HCT116 (cell line): ENCODE measurements at regions of chr9 and their contacts with region 1.

Region 1: GRCh38 chr9:124617471-124618141 is 110.4 kb upstream of the NR5A1 start:
- DNase-seq: peak; percentile 68
- ATAC-seq: peak; percentile 88
- H3K4me3 ChIP-seq: no peak overlapping the region
- H3K27ac ChIP-seq: no peak overlapping the region
- H3K4me1 ChIP-seq: peaks cover 36 to 59% of the 10 kb centered on the region in 2 experiments
- H3K27me3 ChIP-seq: no peaks in the 10 kb centered on the region
- CTCF ChIP-seq: peak; percentile 96
- POLR2A ChIP-seq: no peak
- RAD21 ChIP-seq: peak; percentile 97

Region 2: DNA sequence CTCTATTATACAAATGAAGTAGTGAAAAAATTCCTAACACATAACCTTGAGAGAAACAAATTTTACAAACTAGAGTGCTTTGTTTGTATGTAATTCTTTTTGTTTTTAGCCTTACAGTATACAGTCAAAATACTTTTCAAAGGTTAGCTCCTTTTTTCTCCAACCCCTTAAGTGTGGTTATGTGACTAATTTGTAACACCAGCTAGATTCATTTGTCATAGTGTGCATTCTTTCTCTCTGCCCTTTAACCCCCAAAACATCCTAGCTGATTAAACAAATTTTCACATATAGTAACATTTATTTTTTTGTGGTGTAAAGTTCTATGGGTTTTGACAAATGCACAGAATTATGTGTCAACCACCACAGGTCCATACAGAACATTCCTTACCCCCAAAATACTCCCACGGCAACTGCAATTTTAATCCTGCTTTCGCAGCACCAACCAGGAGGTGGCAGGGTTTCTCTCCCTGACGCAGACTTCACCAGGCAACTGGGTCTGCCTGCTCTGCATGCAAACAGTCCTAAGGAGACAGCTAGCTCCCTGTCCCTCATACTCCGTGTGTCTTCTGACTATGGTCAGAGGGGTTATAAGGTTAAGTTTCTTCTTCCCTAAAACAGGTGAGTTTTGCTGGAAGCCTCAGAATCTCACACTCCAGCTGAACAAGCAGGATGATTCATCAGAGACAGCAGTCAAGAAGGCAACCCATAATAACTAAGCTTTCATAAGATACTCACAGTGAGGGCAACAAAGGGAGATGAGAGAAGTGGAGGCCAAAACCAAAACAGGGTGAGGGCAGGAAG is 65.9 kb before region 1 on chr9:
- CTCF ChIA-PET with region 1: interaction called, 42 read pairs
- POLR2A ChIA-PET with region 1: no interaction called
- RAD21 ChIA-PET with region 1: interaction called, 7 to 10 read pairs
- intact Hi-C with region 1: loop called (anchors 1 kb)
- DNase-seq: peak; percentile 46
- ATAC-seq: peak; percentile 94
- H3K4me3 ChIP-seq: no peak overlapping the region
- H3K27ac ChIP-seq: no peak overlapping the region
- H3K4me1 ChIP-seq: peaks cover 2 to 24% of the 10 kb centered on the region in 2 experiments; a peak in 3 of 4 replicates
- H3K27me3 ChIP-seq: no peaks in the 10 kb centered on the region
- CTCF ChIP-seq: peak; percentile 80 to 93 (median 87)
- POLR2A ChIP-seq: no peak
- RAD21 ChIP-seq: peak; percentile 92

Region 3: GRCh38 chr9:124605258-124605657 is 12.3 kb before region 1 on chr9:
- CTCF ChIA-PET with region 1: interaction called, 16 read pairs
- POLR2A ChIA-PET with region 1: no interaction called
- RAD21 ChIA-PET with region 1: no interaction called
- intact Hi-C with region 1: no loop called
- DNase-seq: no peak
- ATAC-seq: no peak
- H3K4me3 ChIP-seq: no peak overlapping the region
- H3K27ac ChIP-seq: no peak overlapping the region
- H3K4me1 ChIP-seq: no peaks in the 10 kb centered on the region
- H3K27me3 ChIP-seq: no peaks in the 10 kb centered on the region
- CTCF ChIP-seq: no peak
- POLR2A ChIP-seq: no peak
- RAD21 ChIP-seq: no peak

Region 4: GRCh38 chr9:124639637-124640036 is 22.0 kb after region 1 on chr9:
- CTCF ChIA-PET with region 1: interaction called, 13 read pairs
- POLR2A ChIA-PET with region 1: no interaction called
- RAD21 ChIA-PET with region 1: no interaction called
- intact Hi-C with region 1: no loop called
- DNase-seq: no peak
- ATAC-seq: no peak
- H3K4me3 ChIP-seq: no peak overlapping the region
- H3K27ac ChIP-seq: no peak overlapping the region
- H3K4me1 ChIP-seq: no peaks in the 10 kb centered on the region
- H3K27me3 ChIP-seq: no peaks in the 10 kb centered on the region
- CTCF ChIP-seq: no peak
- POLR2A ChIP-seq: no peak
- RAD21 ChIP-seq: no peak

Region 5: GRCh38 chr9:124684169-124684568 is 66.6 kb after region 1 on chr9:
- CTCF ChIA-PET with region 1: no interaction called
- POLR2A ChIA-PET with region 1: no interaction called
- RAD21 ChIA-PET with region 1: no interaction called
- intact Hi-C with region 1: no loop called
- DNase-seq: no peak
- ATAC-seq: no peak
- H3K4me3 ChIP-seq: no peak overlapping the region
- H3K27ac ChIP-seq: no peak overlapping the region
- H3K4me1 ChIP-seq: no peaks in the 10 kb centered on the region
- H3K27me3 ChIP-seq: no peaks in the 10 kb centered on the region
- CTCF ChIP-seq: no peak
- POLR2A ChIP-seq: no peak
- RAD21 ChIP-seq: no peak

Region 6: GRCh38 chr9:124708633-124709291 is 91.2 kb after region 1 on chr9:
- CTCF ChIA-PET with region 1: interaction called, 77 read pairs
- POLR2A ChIA-PET with region 1: no interaction called
- RAD21 ChIA-PET with region 1: interaction called, 8 to 12 read pairs
- intact Hi-C with region 1: loop called (anchors 1 kb)
- DNase-seq: no peak
- ATAC-seq: no peak
- H3K4me3 ChIP-seq: no peak overlapping the region
- H3K27ac ChIP-seq: no peak overlapping the region
- H3K4me1 ChIP-seq: peaks cover 3 to 13% of the 10 kb centered on the region in 2 experiments
- H3K27me3 ChIP-seq: no peaks in the 10 kb centered on the region
- CTCF ChIP-seq: no peak
- POLR2A ChIP-seq: no peak
- RAD21 ChIP-seq: no peak

Region 7: GRCh38 chr9:124771021-124771866 is 153.6 kb after region 1 on chr9 and contains the start of gene NR6A1:
- CTCF ChIA-PET with region 1: interaction called, 30 read pairs
- POLR2A ChIA-PET with region 1: interaction called, 3 read pairs
- RAD21 ChIA-PET with region 1: no interaction called
- intact Hi-C with region 1: no loop called
- DNase-seq: peak; percentile 95
- ATAC-seq: peak; percentile 81
- H3K4me3 ChIP-seq: peak within 1 kb of the TSS; percentile 71 to 73
- H3K27ac ChIP-seq: peak within 1 kb of the TSS; percentile 90
- H3K4me1 ChIP-seq: peaks cover 22 to 44% of the 10 kb centered on the region in 2 experiments
- H3K27me3 ChIP-seq: no peaks in the 10 kb centered on the region
- CTCF ChIP-seq: 0 out of 6 replicates have a peak, but pooled peaks of 1 of the 3 experiments have one; percentile 8
- POLR2A ChIP-seq: peak; percentile 47
- RAD21 ChIP-seq: no peak
- total RNA-seq, gene NR6A1: 9.9 TPM

Region 8: GRCh38 chr9:124880501-124880900 is 262.9 kb after region 1 on chr9:
- CTCF ChIA-PET with region 1: no interaction called
- POLR2A ChIA-PET with region 1: no interaction called
- RAD21 ChIA-PET with region 1: no interaction called
- intact Hi-C with region 1: no loop called
- DNase-seq: no peak
- ATAC-seq: no peak
- H3K4me3 ChIP-seq: no peak overlapping the region
- H3K27ac ChIP-seq: no peak overlapping the region
- H3K4me1 ChIP-seq: no peaks in the 10 kb centered on the region
- H3K27me3 ChIP-seq: no peaks in the 10 kb centered on the region
- CTCF ChIP-seq: no peak
- POLR2A ChIP-seq: no peak
- RAD21 ChIP-seq: no peak

Region 9: GRCh38 chr9:125732562-125732961 is 1115.0 kb after region 1 on chr9:
- CTCF ChIA-PET with region 1: no interaction called
- POLR2A ChIA-PET with region 1: no interaction called
- RAD21 ChIA-PET with region 1: no interaction called
- intact Hi-C with region 1: no loop called
- DNase-seq: no peak
- ATAC-seq: no peak
- H3K4me3 ChIP-seq: no peak overlapping the region
- H3K27ac ChIP-seq: no peak overlapping the region
- H3K4me1 ChIP-seq: no peaks in the 10 kb centered on the region
- H3K27me3 ChIP-seq: no peaks in the 10 kb centered on the region
- CTCF ChIP-seq: no peak
- POLR2A ChIP-seq: no peak
- RAD21 ChIP-seq: no peak